Esophagus squamous epithelium (tissue), 5 donors: ENCODE measurements at regions of chr11 and their contacts with region 1.

Region 1: GRCh38 chr11:27183672-27184457 is 143.2 kb downstream of the BBOX1 start:
- DNase-seq: no peak
- H3K4me3 ChIP-seq: no peak overlapping the region
- H3K27ac ChIP-seq: no peak overlapping the region
- H3K4me1 ChIP-seq: peaks cover 0 to 12% (median 4%) of the 10 kb centered on the region in 3 donors
- H3K27me3 ChIP-seq: no peaks in the 10 kb centered on the region
- CTCF ChIP-seq: peak; percentile 39 to 88 (median 69)
- POLR2A ChIP-seq: no peak

Region 2: GRCh38 chr11:27296497-27296896 is 112.6 kb after region 1 on chr11:
- intact Hi-C with region 1: loop called (anchors 5 kb)
- DNase-seq: no peak
- H3K4me3 ChIP-seq: no peak overlapping the region
- H3K27ac ChIP-seq: no peak overlapping the region
- H3K4me1 ChIP-seq: peaks cover 0 to 21% (median 0%) of the 10 kb centered on the region in 3 donors
- H3K27me3 ChIP-seq: no peaks in the 10 kb centered on the region
- CTCF ChIP-seq: peak; percentile 24 to 74 (median 56)
- POLR2A ChIP-seq: no peak

Region 3: DNA sequence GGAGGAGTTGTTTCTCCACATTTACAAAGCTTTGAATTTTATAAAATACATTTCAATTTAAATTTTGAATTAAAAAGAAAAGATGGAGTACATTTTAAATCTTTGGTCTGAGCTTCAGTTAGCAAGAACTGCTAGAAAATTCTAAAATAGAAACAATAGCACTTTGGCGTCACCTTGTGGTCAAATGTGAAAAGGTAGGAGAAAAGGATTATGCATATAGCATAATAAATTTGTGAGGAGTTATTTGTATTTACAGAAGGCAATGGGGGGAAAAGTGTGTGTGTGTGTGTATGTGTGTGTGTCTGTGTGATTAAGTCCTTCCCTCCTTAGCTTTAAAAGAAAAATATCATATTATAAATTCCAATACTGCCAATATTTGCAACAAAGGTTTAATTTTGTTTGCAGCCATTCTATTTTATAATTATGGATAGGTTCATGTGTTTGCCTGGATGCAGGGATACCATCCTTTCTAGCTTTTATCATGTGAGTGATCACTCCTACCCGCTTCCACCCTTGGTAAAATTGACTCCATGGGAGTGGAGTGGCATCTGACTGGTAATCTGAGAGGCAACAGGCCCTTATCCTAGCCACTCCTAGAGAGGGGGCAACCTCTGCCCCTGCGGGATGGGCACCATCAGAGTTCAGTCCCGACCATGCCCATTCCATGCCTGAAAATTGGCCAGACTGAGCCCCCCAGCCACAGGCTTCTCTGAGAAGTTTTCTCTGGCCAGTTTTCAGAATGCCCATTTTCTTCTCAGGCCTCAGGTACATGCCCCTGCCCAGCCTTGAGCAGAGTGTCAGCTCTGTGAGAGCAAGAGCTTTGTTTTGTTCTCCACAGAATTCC is 302.3 kb after region 1 on chr11:
- intact Hi-C with region 1: loop called (anchors 5 kb)
- DNase-seq: no peak
- H3K4me3 ChIP-seq: no peak overlapping the region
- H3K27ac ChIP-seq: no peak overlapping the region
- H3K4me1 ChIP-seq: no peaks in the 10 kb centered on the region
- H3K27me3 ChIP-seq: no peaks in the 10 kb centered on the region
- CTCF ChIP-seq: peak; percentile 75 to 97 (median 92)
- POLR2A ChIP-seq: no peak